ENCODE measurements at regions of chr3 and their contacts with region 1.

Region 1: GRCh38 chr3:149969940-149970715 is 567 bp downstream of the PFN2 start:
- DNase-seq: peak; percentile 90
- H3K4me3 ChIP-seq: peak overlapping the region; percentile 65 to 92 (median 88)
- H3K27ac ChIP-seq: peak overlapping the region; percentile 94
- H3K4me1 ChIP-seq: peaks cover 27% of the 10 kb centered on the region
- H3K27me3 ChIP-seq: peaks cover 0 to 3% of the 10 kb centered on the region in 2 experiments
- CTCF ChIP-seq: no peak
- POLR2A ChIP-seq: peak; percentile 30

Region 2: GRCh38 chr3:148513167-148513566 is 1457.0 kb before region 1 on chr3:
- CTCF ChIA-PET with region 1: no interaction called
- POLR2A ChIA-PET with region 1: no interaction called
- dilution Hi-C with region 1: no loop called
- intact Hi-C with region 1: loop called (anchors 10 kb)
- DNase-seq: peak; percentile 75
- H3K4me3 ChIP-seq: no peak overlapping the region
- H3K27ac ChIP-seq: peak overlapping the region; percentile 79
- H3K4me1 ChIP-seq: peaks cover 14% of the 10 kb centered on the region
- H3K27me3 ChIP-seq: no peaks in the 10 kb centered on the region
- CTCF ChIP-seq: no peak
- POLR2A ChIP-seq: no peak

Region 3: GRCh38 chr3:149174901-149175300 is 795.2 kb before region 1 on chr3:
- CTCF ChIA-PET with region 1: no interaction called
- POLR2A ChIA-PET with region 1: no interaction called
- dilution Hi-C with region 1: no loop called
- intact Hi-C with region 1: no loop called
- DNase-seq: no peak
- H3K4me3 ChIP-seq: no peak overlapping the region
- H3K27ac ChIP-seq: no peak overlapping the region
- H3K4me1 ChIP-seq: peaks cover 16% of the 10 kb centered on the region
- H3K27me3 ChIP-seq: no peaks in the 10 kb centered on the region
- CTCF ChIP-seq: no peak
- POLR2A ChIP-seq: no peak

Region 4: DNA sequence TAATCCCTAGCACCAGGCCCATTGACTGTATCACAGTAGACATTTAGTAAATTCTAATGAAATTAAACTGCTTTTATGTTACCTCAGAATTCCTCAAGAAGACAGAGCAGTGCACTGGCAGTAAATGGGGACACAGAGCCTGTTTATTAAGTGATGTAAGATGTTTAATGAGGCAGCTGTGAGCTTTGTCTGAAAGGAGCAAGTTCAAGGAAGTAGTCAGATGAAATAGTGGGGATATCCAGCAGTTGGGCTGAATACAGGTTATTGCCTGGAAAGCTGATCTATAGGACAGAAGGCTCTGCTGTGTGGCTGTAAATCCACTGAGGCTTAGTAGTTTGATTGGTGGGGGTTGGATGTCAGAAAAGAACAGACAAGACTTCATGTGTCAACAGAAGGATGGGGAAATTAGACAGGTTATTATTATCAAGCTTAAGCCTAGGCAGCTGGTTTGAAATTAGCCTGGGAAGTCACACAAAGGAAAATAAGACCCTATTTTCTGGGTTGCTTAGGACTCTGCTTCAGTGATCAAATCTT is 61.6 kb before region 1 on chr3:
- CTCF ChIA-PET with region 1: no interaction called
- POLR2A ChIA-PET with region 1: no interaction called
- dilution Hi-C with region 1: no loop called
- intact Hi-C with region 1: no loop called
- DNase-seq: no peak
- H3K4me3 ChIP-seq: no peak overlapping the region
- H3K27ac ChIP-seq: no peak overlapping the region
- H3K4me1 ChIP-seq: no peaks in the 10 kb centered on the region
- H3K27me3 ChIP-seq: no peaks in the 10 kb centered on the region
- CTCF ChIP-seq: no peak
- POLR2A ChIP-seq: no peak

Region 5: DNA sequence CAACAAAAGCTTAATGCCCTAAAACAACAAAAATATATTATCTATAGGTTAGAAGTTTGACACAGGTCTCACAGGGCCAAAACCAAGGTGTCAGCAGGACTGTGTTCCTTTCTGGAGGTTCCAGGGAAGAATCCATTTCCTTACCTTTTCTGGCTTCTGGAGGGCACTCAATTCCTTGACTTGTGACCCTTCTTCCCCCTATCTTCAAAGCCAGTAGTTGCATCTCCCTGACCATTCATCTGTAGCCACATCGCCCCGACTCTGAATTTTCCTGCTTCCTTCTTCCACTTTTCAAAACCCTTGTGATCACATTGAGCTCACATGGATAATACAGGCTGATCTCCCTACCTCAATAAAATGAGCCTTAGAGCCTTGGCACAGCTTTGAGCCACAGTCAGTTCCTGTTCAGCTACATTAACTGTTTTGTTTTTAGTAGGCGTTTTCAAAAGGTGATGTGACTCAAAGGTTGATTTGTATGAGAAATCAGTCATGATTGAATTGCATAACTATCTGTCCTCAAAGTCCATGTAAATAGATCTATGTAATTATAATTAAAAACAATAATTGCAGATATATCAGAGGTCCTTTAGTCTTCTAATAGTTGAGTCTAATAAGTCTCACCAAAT is 11.8 kb before region 1 on chr3:
- CTCF ChIA-PET with region 1: interaction called, 12 read pairs
- POLR2A ChIA-PET with region 1: interaction called, 4 read pairs
- dilution Hi-C with region 1: no loop called
- intact Hi-C with region 1: no loop called
- DNase-seq: no peak
- H3K4me3 ChIP-seq: no peak overlapping the region
- H3K27ac ChIP-seq: no peak overlapping the region
- H3K4me1 ChIP-seq: peaks cover 14% of the 10 kb centered on the region
- H3K27me3 ChIP-seq: no peaks in the 10 kb centered on the region
- CTCF ChIP-seq: no peak
- POLR2A ChIP-seq: no peak

Region 6: GRCh38 chr3:149990423-149990948 is 20.4 kb after region 1 on chr3:
- CTCF ChIA-PET with region 1: no interaction called
- POLR2A ChIA-PET with region 1: no interaction called
- dilution Hi-C with region 1: no loop called
- intact Hi-C with region 1: no loop called
- DNase-seq: no peak
- H3K4me3 ChIP-seq: no peak overlapping the region
- H3K27ac ChIP-seq: no peak overlapping the region
- H3K4me1 ChIP-seq: no peaks in the 10 kb centered on the region
- H3K27me3 ChIP-seq: peaks cover 5 to 8% of the 10 kb centered on the region in 2 experiments
- CTCF ChIP-seq: no peak
- POLR2A ChIP-seq: no peak

Region 7: DNA sequence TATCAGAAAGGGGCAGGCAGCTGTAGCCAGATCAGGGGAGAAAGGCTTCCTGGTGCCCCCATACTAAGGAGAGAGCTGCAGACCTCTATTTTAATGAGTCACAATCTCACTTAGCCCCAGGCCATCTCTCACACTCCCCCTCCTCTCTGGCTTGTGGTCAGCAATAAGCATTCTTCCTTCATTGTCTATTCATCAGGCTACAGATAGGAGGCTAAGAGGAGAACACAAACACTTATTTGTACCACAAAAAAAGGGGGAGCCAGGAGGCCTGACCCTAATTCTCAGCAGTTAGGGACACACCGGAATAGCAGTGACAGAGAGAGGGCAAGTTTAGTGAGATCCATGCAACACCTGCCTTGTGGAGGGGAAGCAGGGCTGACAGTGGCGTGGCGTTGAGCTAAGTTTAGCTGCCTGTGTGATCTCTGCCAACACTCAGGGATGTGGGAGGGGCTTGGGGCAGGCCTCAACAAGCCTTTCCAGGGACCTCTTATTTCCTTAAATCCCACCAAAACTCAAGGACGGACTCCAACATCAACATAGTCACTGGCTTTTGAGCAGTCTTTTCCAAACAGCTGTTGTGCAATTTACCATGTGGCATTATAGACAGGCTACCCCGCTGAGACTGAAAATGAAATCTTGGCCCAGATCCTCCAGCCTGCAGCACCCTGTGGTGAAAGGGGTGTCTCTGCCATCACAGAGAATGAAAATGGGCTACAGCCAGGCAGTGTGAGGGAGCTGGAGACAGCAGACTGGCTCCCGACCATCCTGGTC is 246.1 kb after region 1 on chr3:
- CTCF ChIA-PET with region 1: interaction called, 20 read pairs
- POLR2A ChIA-PET with region 1: no interaction called
- dilution Hi-C with region 1: no loop called
- intact Hi-C with region 1: loop called (anchors 1 kb)
- DNase-seq: peak; percentile 12
- H3K4me3 ChIP-seq: no peak overlapping the region
- H3K27ac ChIP-seq: no peak overlapping the region
- H3K4me1 ChIP-seq: no peaks in the 10 kb centered on the region
- H3K27me3 ChIP-seq: peaks cover 24 to 26% of the 10 kb centered on the region in 2 experiments
- CTCF ChIP-seq: no peak
- POLR2A ChIP-seq: no peak

Region 8: GRCh38 chr3:150546226-150547044 is 576.3 kb after region 1 on chr3 and contains the starts of genes EIF2A and SERP1:
- CTCF ChIA-PET with region 1: interaction called, 3 read pairs
- POLR2A ChIA-PET with region 1: no interaction called
- dilution Hi-C with region 1: no loop called
- intact Hi-C with region 1: loop called (anchors 1 kb)
- DNase-seq: peak; percentile 100
- H3K4me3 ChIP-seq: peak within 1 kb of the TSS; percentile 80 to 98 (median 93)
- H3K27ac ChIP-seq: peak within 1 kb of the TSS; percentile 97
- H3K4me1 ChIP-seq: peaks cover 25% of the 10 kb centered on the region
- H3K27me3 ChIP-seq: no peaks in the 10 kb centered on the region
- CTCF ChIP-seq: no peak
- POLR2A ChIP-seq: peak; percentile 85
- total RNA-seq, gene EIF2A: 97.6 and 104 TPM in 2 replicates
- total RNA-seq, gene SERP1: 81.7 and 82.0 TPM in 2 replicates

Region 9: DNA sequence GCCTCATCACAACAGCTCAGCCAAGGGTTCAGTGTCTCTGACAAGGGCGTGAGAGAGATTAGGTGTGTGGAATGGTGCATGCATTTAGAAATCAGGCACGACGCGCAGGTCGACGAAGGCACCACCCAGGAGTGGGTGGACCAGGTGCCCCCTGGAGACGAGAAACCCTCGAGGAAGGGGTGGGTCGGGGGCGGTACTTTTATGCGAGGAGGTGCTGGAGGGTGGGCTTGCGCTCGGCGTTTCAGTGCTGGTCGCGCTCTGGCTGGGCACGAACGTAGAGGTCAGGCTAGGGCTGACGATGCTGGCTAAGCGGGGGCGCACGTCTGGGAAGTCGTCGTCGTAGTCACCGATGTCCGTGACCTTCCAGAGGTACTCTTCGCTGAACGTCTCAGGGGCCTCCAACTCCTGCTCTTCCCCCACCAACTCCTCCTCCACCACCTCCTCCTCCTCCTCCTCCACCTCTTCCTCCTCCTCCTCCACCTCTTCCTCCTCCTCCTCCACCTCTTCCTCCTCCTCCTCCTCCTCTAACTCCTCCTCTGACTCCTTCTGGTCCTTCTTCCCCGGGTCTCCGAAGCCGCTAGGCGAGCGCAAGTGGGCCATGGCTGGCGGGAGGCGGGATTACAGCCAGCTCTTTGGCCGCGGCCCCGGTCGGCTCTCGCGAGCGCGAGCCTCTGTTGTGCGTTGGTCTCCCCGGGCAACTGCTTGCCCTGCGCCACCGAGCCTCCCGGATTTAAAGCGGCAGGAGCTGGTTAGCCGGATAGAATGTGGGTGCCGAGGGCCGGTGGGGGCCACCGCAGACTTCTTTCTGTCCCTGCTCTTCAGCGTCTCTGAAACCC is 733.4 kb after region 1 on chr3 and contains the start of gene ERICH6:
- CTCF ChIA-PET with region 1: no interaction called
- POLR2A ChIA-PET with region 1: no interaction called
- dilution Hi-C with region 1: no loop called
- intact Hi-C with region 1: loop called (anchors 5 kb)
- DNase-seq: peak; percentile 90
- H3K4me3 ChIP-seq: peak within 1 kb of the TSS; percentile 43 to 78 (median 68)
- H3K27ac ChIP-seq: peak within 1 kb of the TSS; percentile 72
- H3K4me1 ChIP-seq: peaks cover 7% of the 10 kb centered on the region
- H3K27me3 ChIP-seq: no peaks in the 10 kb centered on the region
- CTCF ChIP-seq: peak in 1 of 2 donors; percentile 12
- POLR2A ChIP-seq: peak; percentile 58
- total RNA-seq, gene ERICH6: not detected in 2 replicates